HAP-1 (cell line): ENCODE measurements at regions of chr18 and their contacts with region 1.

Region 1: GRCh38 chr18:21740724-21741510 is at the start of gene MIB1:
- DNase-seq: peak in 1 of 2 experiments; percentile 71
- H3K4me3 ChIP-seq: peak within 1 kb of the TSS; percentile 80
- H3K4me1 ChIP-seq: peaks cover 21% of the 10 kb centered on the region
- H3K27me3 ChIP-seq: no peaks in the 10 kb centered on the region

Region 2: GRCh38 chr18:21264651-21265050 is 476.3 kb before region 1 on chr18:
- in situ Hi-C with region 1: loop called (anchors 25 kb)
- DNase-seq: peak; percentile 41 to 65
- H3K4me3 ChIP-seq: no peak overlapping the region
- H3K4me1 ChIP-seq: peaks cover 59% of the 10 kb centered on the region
- H3K27me3 ChIP-seq: no peaks in the 10 kb centered on the region

Region 3: GRCh38 chr18:22282311-22283112 is 541.6 kb after region 1 on chr18:
- in situ Hi-C with region 1: no loop called
- DNase-seq: peak; percentile 18 to 75
- H3K4me3 ChIP-seq: no peak overlapping the region
- H3K4me1 ChIP-seq: peaks cover 14% of the 10 kb centered on the region
- H3K27me3 ChIP-seq: peaks cover 13% of the 10 kb centered on the region